ENCODE measurements at regions of chr7 and their contacts with region 1.

Region 1: GRCh38 chr7:5354460-5355232 is 69.0 kb downstream of the TNRC18 start:
- DNase-seq: peak; percentile 88
- H3K4me3 ChIP-seq: no peak overlapping the region
- H3K27ac ChIP-seq: peak overlapping the region; percentile 38 to 52
- H3K4me1 ChIP-seq: peaks cover 37% of the 10 kb centered on the region
- H3K27me3 ChIP-seq: no peaks in the 10 kb centered on the region
- CTCF ChIP-seq: no peak
- POLR2A ChIP-seq: no peak

Region 2: DNA sequence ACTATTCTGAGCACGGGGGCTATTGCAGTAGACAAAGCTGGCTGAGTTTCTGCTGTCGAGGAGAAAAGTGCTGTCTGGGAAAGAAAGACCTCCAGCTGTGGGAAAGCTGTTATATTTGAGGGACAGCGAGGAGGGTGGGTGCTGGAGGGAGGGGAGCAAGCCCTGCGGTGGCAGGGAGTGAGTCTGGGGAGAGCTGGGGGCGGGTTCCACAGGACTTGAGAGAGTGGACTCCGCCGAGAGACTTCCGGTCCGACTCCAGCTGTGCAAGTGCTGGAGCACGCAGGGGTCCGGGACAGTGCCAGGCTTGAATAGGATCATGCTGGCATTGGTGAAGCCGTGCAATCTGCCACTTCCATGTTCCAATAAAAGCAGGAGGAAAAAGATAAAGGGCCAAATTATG is 1274.6 kb before region 1 on chr7:
- intact Hi-C with region 1: no loop called
- DNase-seq: no peak
- H3K4me3 ChIP-seq: no peak overlapping the region
- H3K27ac ChIP-seq: no peak overlapping the region
- H3K4me1 ChIP-seq: no peaks in the 10 kb centered on the region
- H3K27me3 ChIP-seq: no peaks in the 10 kb centered on the region
- CTCF ChIP-seq: no peak
- POLR2A ChIP-seq: no peak

Region 3: GRCh38 chr7:5210751-5211338 is 143.8 kb before region 1 on chr7:
- intact Hi-C with region 1: no loop called
- DNase-seq: no peak
- H3K4me3 ChIP-seq: no peak overlapping the region
- H3K27ac ChIP-seq: no peak overlapping the region
- H3K4me1 ChIP-seq: no peaks in the 10 kb centered on the region
- H3K27me3 ChIP-seq: no peaks in the 10 kb centered on the region
- CTCF ChIP-seq: no peak
- POLR2A ChIP-seq: no peak

Region 4: GRCh38 chr7:5248201-5248885 is 106.3 kb before region 1 on chr7:
- intact Hi-C with region 1: loop called (anchors 10 kb)
- DNase-seq: no peak
- H3K4me3 ChIP-seq: no peak overlapping the region
- H3K27ac ChIP-seq: peak overlapping the region in 1 of 2 donors; percentile 30
- H3K4me1 ChIP-seq: no peaks in the 10 kb centered on the region
- H3K27me3 ChIP-seq: no peaks in the 10 kb centered on the region
- CTCF ChIP-seq: no peak
- POLR2A ChIP-seq: no peak

Region 5: GRCh38 chr7:5314864-5315263 is 39.8 kb before region 1 on chr7:
- intact Hi-C with region 1: no loop called
- DNase-seq: no peak
- H3K4me3 ChIP-seq: no peak overlapping the region
- H3K27ac ChIP-seq: no peak overlapping the region
- H3K4me1 ChIP-seq: no peaks in the 10 kb centered on the region
- H3K27me3 ChIP-seq: no peaks in the 10 kb centered on the region
- CTCF ChIP-seq: no peak
- POLR2A ChIP-seq: no peak

Region 6: GRCh38 chr7:5423844-5424688 is 69.4 kb after region 1 on chr7:
- intact Hi-C with region 1: loop called (anchors 5 kb)
- DNase-seq: peak; percentile 98
- H3K4me3 ChIP-seq: peak overlapping the region; percentile 95 to 98
- H3K27ac ChIP-seq: peak overlapping the region; percentile 100
- H3K4me1 ChIP-seq: no peaks in the 10 kb centered on the region
- H3K27me3 ChIP-seq: no peaks in the 10 kb centered on the region
- CTCF ChIP-seq: no peak
- POLR2A ChIP-seq: peak; percentile 78

Region 7: GRCh38 chr7:5567790-5568189 is 213.1 kb after region 1 on chr7:
- intact Hi-C with region 1: no loop called
- DNase-seq: no peak
- H3K4me3 ChIP-seq: no peak overlapping the region
- H3K27ac ChIP-seq: no peak overlapping the region
- H3K4me1 ChIP-seq: no peaks in the 10 kb centered on the region
- H3K27me3 ChIP-seq: no peaks in the 10 kb centered on the region
- CTCF ChIP-seq: no peak
- POLR2A ChIP-seq: no peak

Measured in prostate gland (tissue), 2 donors.